HCT116 (cell line): ENCODE measurements at regions of chrX and their contacts with region 1.

Region 1: GRCh38 chrX:132615391-132616131 is 126.7 kb upstream of the MBNL3 start:
- DNase-seq: peak; percentile 29
- ATAC-seq: peak; percentile 91
- H3K4me3 ChIP-seq: no peak overlapping the region
- H3K27ac ChIP-seq: no peak overlapping the region
- H3K4me1 ChIP-seq: no peaks in the 10 kb centered on the region
- H3K27me3 ChIP-seq: no peaks in the 10 kb centered on the region
- CTCF ChIP-seq: peak; percentile 43 to 54 (median 48); a peak in 5 of 6 replicates
- POLR2A ChIP-seq: no peak
- RAD21 ChIP-seq: peak; percentile 43

Region 2: DNA sequence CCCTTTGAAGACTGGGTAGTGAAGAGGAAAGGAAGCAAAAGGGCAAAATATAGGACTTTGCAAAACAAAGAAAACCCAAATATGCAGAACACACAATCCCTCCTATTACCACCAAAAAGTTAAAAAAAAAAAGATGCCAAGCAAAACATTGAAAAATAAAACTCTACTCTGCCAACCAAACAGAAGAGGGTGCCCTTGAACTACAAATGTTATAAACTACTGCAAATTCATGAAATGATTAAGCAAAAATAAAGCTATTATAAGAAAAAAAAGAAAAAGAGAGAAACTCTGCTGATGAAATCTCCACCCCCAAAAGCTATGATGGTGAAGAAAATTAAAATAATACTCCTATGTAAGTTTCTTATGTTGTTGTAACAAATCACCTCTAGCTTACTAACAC is 761.0 kb before region 1 on chrX:
- CTCF ChIA-PET with region 1: interaction called, 5 read pairs
- POLR2A ChIA-PET with region 1: no interaction called
- RAD21 ChIA-PET with region 1: interaction called in 1 of 2 experiments, 3 read pairs
- intact Hi-C with region 1: loop called (anchors 1 kb)
- DNase-seq: no peak
- ATAC-seq: no peak
- H3K4me3 ChIP-seq: no peak overlapping the region
- H3K27ac ChIP-seq: no peak overlapping the region
- H3K4me1 ChIP-seq: no peaks in the 10 kb centered on the region
- H3K27me3 ChIP-seq: no peaks in the 10 kb centered on the region
- CTCF ChIP-seq: peak in 1 of 3 experiments; percentile 41; a peak in 2 of 6 replicates
- POLR2A ChIP-seq: no peak
- RAD21 ChIP-seq: peak; percentile 55

Region 3: GRCh38 chrX:132092439-132093065 is 523.0 kb before region 1 on chrX:
- CTCF ChIA-PET with region 1: interaction called, 11 read pairs
- POLR2A ChIA-PET with region 1: no interaction called
- RAD21 ChIA-PET with region 1: interaction called in 1 of 2 experiments, 3 read pairs
- intact Hi-C with region 1: loop called (anchors 5 kb)
- DNase-seq: peak; percentile 52
- ATAC-seq: peak; percentile 96
- H3K4me3 ChIP-seq: no peak overlapping the region
- H3K27ac ChIP-seq: no peak overlapping the region
- H3K4me1 ChIP-seq: no peaks in the 10 kb centered on the region
- H3K27me3 ChIP-seq: no peaks in the 10 kb centered on the region
- CTCF ChIP-seq: peak; percentile 59 to 74 (median 65)
- POLR2A ChIP-seq: no peak
- RAD21 ChIP-seq: peak; percentile 68; the same call in 1 of the 2 replicates

Region 4: GRCh38 chrX:132226169-132226568 is 389.4 kb before region 1 on chrX:
- CTCF ChIA-PET with region 1: interaction called, 20 read pairs
- POLR2A ChIA-PET with region 1: no interaction called
- RAD21 ChIA-PET with region 1: interaction called in 1 of 2 experiments, 3 read pairs
- intact Hi-C with region 1: loop called (anchors 2 kb)
- DNase-seq: no peak
- ATAC-seq: no peak
- H3K4me3 ChIP-seq: no peak overlapping the region
- H3K27ac ChIP-seq: no peak overlapping the region
- H3K4me1 ChIP-seq: peaks cover 0 to 4% of the 10 kb centered on the region in 2 experiments; a peak in 1 of 4 replicates
- H3K27me3 ChIP-seq: no peaks in the 10 kb centered on the region
- CTCF ChIP-seq: peak; percentile 20 to 29 (median 27); a peak in 3 of 6 replicates
- POLR2A ChIP-seq: no peak
- RAD21 ChIP-seq: peak; percentile 54

Region 5: GRCh38 chrX:132292793-132293192 is 322.8 kb before region 1 on chrX:
- CTCF ChIA-PET with region 1: interaction called, 3 read pairs
- POLR2A ChIA-PET with region 1: no interaction called
- RAD21 ChIA-PET with region 1: no interaction called
- intact Hi-C with region 1: loop called (anchors 2 kb)
- DNase-seq: peak; percentile 15
- ATAC-seq: peak; percentile 67; the same call in 1 of the 2 replicates
- H3K4me3 ChIP-seq: no peak overlapping the region
- H3K27ac ChIP-seq: no peak overlapping the region
- H3K4me1 ChIP-seq: no peaks in the 10 kb centered on the region
- H3K27me3 ChIP-seq: no peaks in the 10 kb centered on the region
- CTCF ChIP-seq: peak; percentile 38 to 51 (median 43); a peak in 4 of 6 replicates
- POLR2A ChIP-seq: no peak
- RAD21 ChIP-seq: peak; percentile 49

Region 6: DNA sequence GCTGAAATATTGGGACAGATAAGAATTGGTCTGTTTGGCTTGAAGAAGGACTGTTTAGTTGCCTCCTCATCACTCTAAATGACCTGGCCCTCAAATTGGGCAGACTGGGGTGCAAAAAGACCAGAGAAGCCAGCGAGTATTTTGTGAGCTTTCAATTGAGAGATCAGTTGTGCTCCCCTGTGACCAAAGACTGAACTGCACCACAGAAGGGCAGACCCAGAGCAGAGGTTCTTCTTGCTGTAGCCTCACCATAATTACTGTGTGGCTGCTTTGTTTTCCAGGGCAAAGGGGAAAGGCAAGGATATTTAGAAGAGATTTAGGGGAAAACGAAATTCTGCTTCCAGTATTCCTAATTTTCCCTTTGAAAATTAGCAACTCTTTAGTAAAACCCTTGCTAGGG is 22.7 kb before region 1 on chrX:
- CTCF ChIA-PET with region 1: no interaction called
- POLR2A ChIA-PET with region 1: no interaction called
- RAD21 ChIA-PET with region 1: no interaction called
- intact Hi-C with region 1: no loop called
- DNase-seq: no peak
- ATAC-seq: peak; percentile 70
- H3K4me3 ChIP-seq: no peak overlapping the region
- H3K27ac ChIP-seq: no peak overlapping the region
- H3K4me1 ChIP-seq: no peaks in the 10 kb centered on the region
- H3K27me3 ChIP-seq: no peaks in the 10 kb centered on the region; the same call in 1 of the 2 replicates
- CTCF ChIP-seq: peak in 2 of 3 experiments; percentile 12 to 32; a peak in 2 of 6 replicates
- POLR2A ChIP-seq: no peak
- RAD21 ChIP-seq: peak; percentile 18; the same call in 1 of the 2 replicates

Region 7: GRCh38 chrX:132821974-132822633 is 206.5 kb after region 1 on chrX:
- CTCF ChIA-PET with region 1: no interaction called
- POLR2A ChIA-PET with region 1: no interaction called
- RAD21 ChIA-PET with region 1: no interaction called
- intact Hi-C with region 1: no loop called
- DNase-seq: no peak
- ATAC-seq: no peak
- H3K4me3 ChIP-seq: no peak overlapping the region
- H3K27ac ChIP-seq: no peak overlapping the region
- H3K4me1 ChIP-seq: no peaks in the 10 kb centered on the region
- H3K27me3 ChIP-seq: no peaks in the 10 kb centered on the region
- CTCF ChIP-seq: no peak
- POLR2A ChIP-seq: no peak
- RAD21 ChIP-seq: no peak